IMR-90 (cell line): ENCODE measurements at regions of chr1 and their contacts with region 1.

Region 1: GRCh38 chr1:28877132-28877781 is 37.1 kb upstream of the EPB41 start:
- DNase-seq: peak; percentile 64
- ATAC-seq: peak; percentile 90
- H3K4me3 ChIP-seq: no peak overlapping the region
- H3K27ac ChIP-seq: no peak overlapping the region
- H3K4me1 ChIP-seq: no peaks in the 10 kb centered on the region
- H3K27me3 ChIP-seq: peaks cover 3% of the 10 kb centered on the region; the same call in 1 of the 2 replicates
- CTCF ChIP-seq: peak; percentile 97
- POLR2A ChIP-seq: peak; percentile 25; the same call in 1 of the 2 replicates
- RAD21 ChIP-seq: peak; percentile 98

Region 2: GRCh38 chr1:28518000-28518744 is 359.1 kb before region 1 on chr1:
- CTCF ChIA-PET with region 1: no interaction called
- POLR2A ChIA-PET with region 1: no interaction called
- dilution Hi-C with region 1: no loop called
- in situ Hi-C with region 1: no loop called
- intact Hi-C with region 1: loop called (anchors 5 kb)
- DNase-seq: peak; percentile 81
- ATAC-seq: peak; percentile 86
- H3K4me3 ChIP-seq: peak overlapping the region; percentile 78
- H3K27ac ChIP-seq: peak overlapping the region; percentile 76
- H3K4me1 ChIP-seq: peaks cover 9% of the 10 kb centered on the region
- H3K27me3 ChIP-seq: no peaks in the 10 kb centered on the region
- CTCF ChIP-seq: peak; percentile 91
- POLR2A ChIP-seq: no peak; the same call in 1 of the 2 replicates
- RAD21 ChIP-seq: peak; percentile 72

Region 3: GRCh38 chr1:28648474-28649198 is 228.6 kb before region 1 on chr1 and contains the start of gene RNU11:
- CTCF ChIA-PET with region 1: interaction called, 5 read pairs
- POLR2A ChIA-PET with region 1: interaction called, 6 read pairs
- dilution Hi-C with region 1: no loop called
- in situ Hi-C with region 1: loop called (anchors 5 kb)
- intact Hi-C with region 1: loop called (anchors 1 kb)
- DNase-seq: peak; percentile 100
- ATAC-seq: peak; percentile 72
- H3K4me3 ChIP-seq: peak within 1 kb of the TSS; percentile 28
- H3K27ac ChIP-seq: peak within 1 kb of the TSS; percentile 79
- H3K4me1 ChIP-seq: peaks cover 1% of the 10 kb centered on the region
- H3K27me3 ChIP-seq: no peaks in the 10 kb centered on the region
- CTCF ChIP-seq: no peak
- POLR2A ChIP-seq: peak; percentile 100
- RAD21 ChIP-seq: peak; percentile 15; the same call in 1 of the 2 replicates
- total RNA-seq, gene RNU11: under 0.01 TPM in 1 of 2 replicates, not detected in the other

Region 4: GRCh38 chr1:28779751-28780408 is 97.4 kb before region 1 on chr1:
- CTCF ChIA-PET with region 1: interaction called, 68 read pairs
- POLR2A ChIA-PET with region 1: no interaction called
- dilution Hi-C with region 1: no loop called
- in situ Hi-C with region 1: no loop called
- intact Hi-C with region 1: loop called (anchors 1 kb)
- DNase-seq: no peak
- ATAC-seq: no peak
- H3K4me3 ChIP-seq: no peak overlapping the region
- H3K27ac ChIP-seq: no peak overlapping the region
- H3K4me1 ChIP-seq: peaks cover 2% of the 10 kb centered on the region; the same call in 1 of the 2 replicates
- H3K27me3 ChIP-seq: no peaks in the 10 kb centered on the region
- CTCF ChIP-seq: no peak
- POLR2A ChIP-seq: no peak
- RAD21 ChIP-seq: no peak

Region 5: DNA sequence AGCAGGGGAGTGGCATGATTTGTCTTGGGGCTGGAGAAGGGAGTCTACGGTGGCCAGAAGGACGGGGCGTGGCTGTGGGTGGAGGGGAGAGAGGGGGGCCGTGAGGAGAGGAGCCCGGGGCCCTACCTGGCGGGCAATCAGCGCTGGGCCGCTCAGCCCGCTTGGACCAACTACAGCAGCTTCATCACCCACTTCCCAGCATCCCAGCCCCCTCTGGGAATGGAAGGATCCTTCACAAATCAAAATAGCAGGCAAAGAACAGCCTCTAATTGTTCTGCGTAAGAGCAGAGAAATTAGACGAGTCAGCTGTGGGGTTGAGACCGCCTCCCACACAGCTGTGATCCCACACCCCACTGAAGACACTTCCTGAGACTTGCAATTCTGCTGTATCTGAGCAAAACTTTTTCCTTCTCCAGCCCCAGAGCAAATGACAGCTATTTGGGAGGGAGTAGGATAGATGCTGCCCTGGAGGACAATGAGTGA is 21.7 kb before region 1 on chr1:
- CTCF ChIA-PET with region 1: no interaction called
- POLR2A ChIA-PET with region 1: no interaction called
- dilution Hi-C with region 1: no loop called
- in situ Hi-C with region 1: no loop called
- intact Hi-C with region 1: no loop called
- DNase-seq: no peak
- ATAC-seq: no peak
- H3K4me3 ChIP-seq: no peak overlapping the region
- H3K27ac ChIP-seq: no peak overlapping the region
- H3K4me1 ChIP-seq: no peaks in the 10 kb centered on the region
- H3K27me3 ChIP-seq: peaks cover 29% of the 10 kb centered on the region
- CTCF ChIP-seq: no peak
- POLR2A ChIP-seq: no peak
- RAD21 ChIP-seq: no peak

Region 6: DNA sequence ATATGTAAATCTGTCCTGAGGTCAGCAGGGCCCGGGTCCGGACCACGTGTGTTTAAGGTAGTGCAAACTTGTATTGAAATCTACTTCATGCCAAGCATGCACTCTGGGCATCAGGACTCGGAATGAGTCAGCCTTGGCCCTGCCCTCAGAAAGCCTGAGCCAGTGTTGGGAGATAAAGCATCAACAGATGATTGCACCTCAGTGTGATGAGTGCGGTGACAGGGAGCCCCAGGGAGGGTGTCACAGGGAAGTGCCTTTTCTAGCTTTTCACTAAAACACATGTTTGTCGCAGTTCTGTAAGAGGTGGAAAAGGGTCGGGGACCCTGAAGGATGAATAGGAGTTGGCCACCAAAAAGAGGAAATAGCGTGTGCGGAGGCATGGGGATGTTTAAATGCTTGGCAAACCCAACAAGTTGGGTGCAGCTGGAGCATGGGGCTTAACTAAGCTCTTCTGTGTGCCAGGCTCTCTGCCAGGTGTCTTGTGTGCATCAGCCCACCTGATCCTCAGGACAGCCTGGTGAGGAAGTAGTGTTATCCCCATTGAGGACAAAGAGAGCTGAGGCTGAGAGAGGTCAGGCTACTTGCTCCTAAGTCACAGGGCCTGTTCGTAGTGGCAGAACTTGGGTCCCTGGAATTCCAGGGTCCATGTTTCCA is 11.1 kb before region 1 on chr1:
- CTCF ChIA-PET with region 1: interaction called, 12 read pairs
- POLR2A ChIA-PET with region 1: interaction called, 3 read pairs
- dilution Hi-C with region 1: no loop called
- in situ Hi-C with region 1: no loop called
- intact Hi-C with region 1: no loop called
- DNase-seq: no peak
- ATAC-seq: 0 out of 2 replicates have a peak, but pooled peaks have one; percentile 51
- H3K4me3 ChIP-seq: no peak overlapping the region
- H3K27ac ChIP-seq: no peak overlapping the region
- H3K4me1 ChIP-seq: no peaks in the 10 kb centered on the region
- H3K27me3 ChIP-seq: peaks cover 46% of the 10 kb centered on the region
- CTCF ChIP-seq: no peak
- POLR2A ChIP-seq: no peak
- RAD21 ChIP-seq: no peak

Region 7: DNA sequence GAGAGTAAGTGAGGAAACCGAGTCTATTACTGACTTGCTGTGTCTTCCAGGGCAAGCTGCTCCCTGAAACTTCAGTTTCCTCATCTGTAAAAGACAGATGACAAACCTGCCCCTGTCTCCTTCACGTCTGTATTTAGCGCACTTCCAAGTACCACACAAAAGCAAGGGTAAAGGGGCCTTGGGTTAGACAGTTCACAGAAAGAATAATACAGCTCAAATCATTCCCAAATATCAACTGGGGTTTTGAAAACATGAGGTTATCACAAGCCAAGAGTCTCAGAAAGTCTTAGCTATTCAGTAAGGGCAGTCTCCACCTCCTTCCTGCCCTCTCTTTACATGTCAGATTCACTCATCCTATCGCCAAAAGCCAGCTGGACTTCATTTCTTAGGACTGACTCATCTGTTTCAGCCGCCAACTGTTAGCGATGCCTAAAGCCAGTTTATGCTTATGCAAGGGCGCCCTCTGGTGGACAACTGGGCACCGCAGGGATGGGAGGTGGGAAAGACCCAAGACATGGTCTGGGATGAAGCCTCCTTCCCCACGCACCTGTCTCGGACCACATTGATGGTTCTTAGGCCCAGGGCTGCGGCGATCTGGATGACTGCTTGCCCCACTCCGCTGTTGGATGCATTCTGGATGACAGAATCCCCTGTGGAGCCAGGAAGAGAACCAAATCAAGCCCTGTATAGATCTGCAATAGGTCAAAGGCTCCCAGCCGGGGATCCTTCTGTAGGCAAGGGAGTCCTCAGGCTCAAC is 325.5 kb after region 1 on chr1:
- CTCF ChIA-PET with region 1: interaction called, 28 read pairs
- POLR2A ChIA-PET with region 1: interaction called, 17 read pairs
- dilution Hi-C with region 1: no loop called
- in situ Hi-C with region 1: loop called (anchors 5 kb)
- intact Hi-C with region 1: loop called (anchors 1 kb)
- DNase-seq: peak; percentile 99
- ATAC-seq: peak; percentile 93
- H3K4me3 ChIP-seq: no peak overlapping the region
- H3K27ac ChIP-seq: peak overlapping the region; percentile 85
- H3K4me1 ChIP-seq: peaks cover 16% of the 10 kb centered on the region
- H3K27me3 ChIP-seq: no peaks in the 10 kb centered on the region
- CTCF ChIP-seq: peak; percentile 98
- POLR2A ChIP-seq: peak; percentile 52; the same call in 1 of the 2 replicates
- RAD21 ChIP-seq: peak; percentile 99

Region 8: GRCh38 chr1:29426810-29427209 is 549.6 kb after region 1 on chr1:
- CTCF ChIA-PET with region 1: no interaction called
- POLR2A ChIA-PET with region 1: no interaction called
- dilution Hi-C with region 1: no loop called
- in situ Hi-C with region 1: no loop called
- intact Hi-C with region 1: no loop called
- DNase-seq: no peak
- ATAC-seq: no peak
- H3K4me3 ChIP-seq: no peak overlapping the region
- H3K27ac ChIP-seq: no peak overlapping the region
- H3K4me1 ChIP-seq: no peaks in the 10 kb centered on the region
- H3K27me3 ChIP-seq: 0 out of 2 replicates have a peak, but pooled peaks cover 1% of the 10 kb centered on the region
- CTCF ChIP-seq: no peak
- POLR2A ChIP-seq: no peak
- RAD21 ChIP-seq: no peak